Calu3 (cell line): ENCODE measurements at regions of chr3 and their contacts with region 1.

Region 1: GRCh38 chr3:115814778-115815380 is 191.6 kb downstream of the GAP43 start:
- DNase-seq: peak; percentile 76
- H3K4me3 Mint-ChIP-seq: no peak overlapping the region
- H3K27ac Mint-ChIP-seq: no peak overlapping the region
- H3K4me1 Mint-ChIP-seq: no peaks in the 10 kb centered on the region
- H3K27me3 Mint-ChIP-seq: no peaks in the 10 kb centered on the region
- CTCF ChIP-seq: peak; percentile 78

Region 2: DNA sequence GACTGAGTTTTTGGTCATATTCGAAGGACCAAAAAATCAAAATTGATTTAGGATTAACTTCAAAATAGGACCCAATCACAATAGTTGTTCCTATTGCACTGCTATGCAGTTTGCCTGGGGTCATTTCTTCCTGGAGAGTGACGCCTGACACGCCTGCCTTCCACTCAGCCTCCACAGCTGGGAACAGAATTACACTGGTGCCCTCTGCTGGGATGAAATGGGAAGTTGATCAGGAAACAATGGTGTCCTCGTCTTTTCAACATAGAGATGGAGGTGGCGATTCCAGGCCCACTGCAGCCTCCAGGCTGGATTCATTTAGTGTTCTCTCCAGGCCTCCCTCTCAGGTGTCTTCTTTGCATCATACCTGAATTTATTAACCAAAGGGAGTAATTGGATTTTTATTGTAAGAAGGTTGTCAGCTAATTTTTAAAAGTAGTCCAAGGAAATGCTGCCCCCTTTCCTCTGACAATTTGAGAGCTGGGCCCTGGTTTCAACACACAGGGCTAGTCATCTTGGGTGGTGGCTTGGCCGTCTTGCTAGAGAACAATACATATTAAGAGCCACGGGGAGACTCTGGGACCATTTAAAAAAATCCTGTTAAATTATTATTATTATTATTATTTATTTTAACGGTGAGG is 121.9 kb before region 1 on chr3:
- CTCF ChIA-PET with region 1: interaction called, 3 read pairs
- intact Hi-C with region 1: loop called (anchors 2 kb)
- DNase-seq: peak; percentile 82
- H3K4me3 Mint-ChIP-seq: no peak overlapping the region
- H3K27ac Mint-ChIP-seq: no peak overlapping the region
- H3K4me1 Mint-ChIP-seq: peaks cover 12% of the 10 kb centered on the region
- H3K27me3 Mint-ChIP-seq: no peaks in the 10 kb centered on the region
- CTCF ChIP-seq: peak; percentile 63

Region 3: GRCh38 chr3:115772951-115773350 is 41.9 kb before region 1 on chr3:
- CTCF ChIA-PET with region 1: no interaction called
- intact Hi-C with region 1: no loop called
- DNase-seq: no peak
- H3K4me3 Mint-ChIP-seq: no peak overlapping the region
- H3K27ac Mint-ChIP-seq: no peak overlapping the region
- H3K4me1 Mint-ChIP-seq: peaks cover 12% of the 10 kb centered on the region
- H3K27me3 Mint-ChIP-seq: no peaks in the 10 kb centered on the region
- CTCF ChIP-seq: no peak

Region 4: DNA sequence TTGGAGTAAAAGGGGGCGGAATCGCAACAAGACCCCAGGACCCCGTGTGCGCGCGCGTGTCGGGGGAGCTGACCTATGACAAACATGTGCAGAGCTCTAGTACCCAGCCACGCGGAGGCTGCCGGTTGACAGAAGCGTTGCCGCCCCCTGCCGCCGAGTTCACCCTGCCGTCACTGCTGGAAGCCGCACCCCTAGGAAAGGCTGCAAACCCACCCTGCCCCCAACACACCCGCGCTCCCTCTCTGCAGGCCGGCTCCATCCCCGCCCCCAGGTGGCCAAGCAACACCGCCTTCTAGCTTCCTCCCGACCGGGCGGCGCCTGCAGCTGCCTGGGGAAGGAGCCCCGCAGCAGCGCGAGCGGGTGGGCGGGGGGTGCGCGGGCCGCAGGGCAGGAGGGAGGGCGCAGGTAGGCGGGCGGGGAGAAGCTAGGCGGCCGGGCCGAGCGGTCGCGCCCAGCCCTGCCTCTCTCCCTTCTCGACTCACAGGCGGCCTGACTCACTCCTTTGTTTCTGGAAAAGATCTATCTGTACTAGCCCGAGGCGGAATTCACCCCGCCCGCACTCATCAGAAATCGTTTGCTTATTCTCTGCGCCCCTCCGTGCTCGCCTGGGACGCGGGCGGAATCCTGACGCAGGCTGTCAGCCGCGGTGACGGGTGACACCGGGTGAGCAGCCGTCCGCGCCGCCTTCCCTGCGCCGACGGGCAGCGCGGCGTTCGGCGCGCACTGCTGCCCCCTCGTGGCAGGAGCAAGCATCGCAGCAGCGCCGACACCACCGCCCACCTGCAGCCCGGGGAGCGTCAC is 30.7 kb before region 1 on chr3:
- CTCF ChIA-PET with region 1: interaction called, 14 read pairs
- intact Hi-C with region 1: loop called (anchors 2 kb)
- DNase-seq: peak; percentile 97
- H3K4me3 Mint-ChIP-seq: peak overlapping the region; percentile 86
- H3K27ac Mint-ChIP-seq: peak overlapping the region; percentile 79
- H3K4me1 Mint-ChIP-seq: peaks cover 38% of the 10 kb centered on the region
- H3K27me3 Mint-ChIP-seq: no peaks in the 10 kb centered on the region
- CTCF ChIP-seq: peak; percentile 93